ENCODE measurements at regions of chrX and their contacts with region 1.

Region 1: GRCh38 chrX:71532753-71533425 is at the start of gene OGT:
- DNase-seq: peak; percentile 76 to 98 (median 91)
- ATAC-seq: peak; percentile 78 to 81
- H3K4me3 Mint-ChIP-seq: peak within 1 kb of the TSS; percentile 94 to 99 (median 97)
- H3K27ac Mint-ChIP-seq: peak within 1 kb of the TSS; percentile 95 to 99 (median 98)
- H3K4me1 Mint-ChIP-seq: peaks cover 6 to 40% (median 28%) of the 10 kb centered on the region in 4 donors
- H3K27me3 Mint-ChIP-seq: no peaks in the 10 kb centered on the region
- polyA plus RNA-seq, gene OGT: 29.7 to 32.7 (median 31.3) TPM

Region 2: GRCh38 chrX:71365876-71366673 is 166.8 kb before region 1 on chrX and contains the start of gene TAF1:
- POLR2A ChIA-PET with region 1: interaction called, 45 read pairs
- DNase-seq: peak; percentile 74 to 97 (median 90)
- ATAC-seq: peak; percentile 89 to 91
- H3K4me3 Mint-ChIP-seq: peak within 1 kb of the TSS; percentile 90 to 99 (median 98)
- H3K27ac Mint-ChIP-seq: peak within 1 kb of the TSS; percentile 95 to 100 (median 99)
- H3K4me1 Mint-ChIP-seq: peaks cover 17 to 32% (median 26%) of the 10 kb centered on the region in 4 donors
- H3K27me3 Mint-ChIP-seq: no peaks in the 10 kb centered on the region
- polyA plus RNA-seq, gene TAF1: 4.3 to 10.2 (median 9.9) TPM

Region 3: DNA sequence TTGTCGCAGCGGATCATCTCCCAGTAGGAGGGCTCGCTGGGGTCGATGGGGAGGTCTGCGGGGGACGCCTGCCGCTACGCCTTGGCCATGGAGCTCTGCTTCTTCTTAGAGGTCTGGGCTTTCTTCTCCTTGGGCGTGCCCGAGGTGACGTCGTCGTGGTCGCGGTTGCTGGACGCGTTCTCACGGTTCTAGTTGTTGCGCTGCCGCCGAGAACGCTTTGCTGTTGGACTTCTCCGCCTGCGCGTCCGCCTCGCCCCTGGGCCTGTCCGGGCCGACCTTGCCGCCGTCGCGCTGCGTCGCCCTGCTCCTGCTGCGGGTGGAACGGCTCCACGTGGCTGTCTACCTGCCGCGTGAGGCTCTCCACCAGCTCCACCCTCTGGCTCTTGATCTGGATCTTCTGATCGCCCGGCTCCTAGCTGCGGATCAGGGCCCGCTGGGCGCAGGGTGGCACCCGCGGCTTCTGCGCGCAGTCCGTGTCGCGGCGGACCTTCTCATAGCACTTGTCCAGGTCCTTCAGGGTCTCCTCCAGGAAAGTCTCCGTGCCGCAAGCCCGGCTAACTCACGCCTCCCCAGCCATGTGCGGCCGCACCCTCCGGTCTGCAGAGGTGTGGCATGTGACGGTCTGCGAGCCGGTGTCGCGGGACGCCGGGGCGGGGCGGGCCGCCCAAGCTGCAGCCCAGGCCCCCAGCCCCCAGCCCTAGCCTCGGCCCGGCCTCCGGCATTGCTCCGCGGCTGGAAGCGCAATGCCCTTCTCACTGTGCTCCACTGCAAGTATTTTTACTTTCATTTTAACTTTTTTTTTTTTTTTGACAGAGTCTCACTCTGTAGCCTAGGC is 40.4 kb before region 1 on chrX:
- POLR2A ChIA-PET with region 1: interaction called, 44 read pairs
- DNase-seq: peak; percentile 11 to 70 (median 35)
- ATAC-seq: peak; percentile 87 to 88
- H3K4me3 Mint-ChIP-seq: peak overlapping the region; percentile 76 to 89 (median 84)
- H3K27ac Mint-ChIP-seq: peak overlapping the region in 8 of 10 donors; percentile 34 to 86 (median 79)
- H3K4me1 Mint-ChIP-seq: peaks cover 7 to 22% (median 11%) of the 10 kb centered on the region in 4 donors
- H3K27me3 Mint-ChIP-seq: no peaks in the 10 kb centered on the region

Region 4: GRCh38 chrX:71514367-71515038 is 18.4 kb before region 1 on chrX:
- POLR2A ChIA-PET with region 1: interaction called, 16 read pairs
- DNase-seq: peak in 8 of 10 donors; percentile 31 to 76 (median 58)
- ATAC-seq: peak; percentile 99 to 100
- H3K4me3 Mint-ChIP-seq: peak overlapping the region in 7 of 10 donors; percentile 3 to 30 (median 19)
- H3K27ac Mint-ChIP-seq: peak overlapping the region; percentile 37 to 92 (median 72)
- H3K4me1 Mint-ChIP-seq: peaks cover 12 to 22% (median 18%) of the 10 kb centered on the region in 4 donors
- H3K27me3 Mint-ChIP-seq: no peaks in the 10 kb centered on the region

Region 5: GRCh38 chrX:71550578-71550977 is 17.7 kb after region 1 on chrX:
- POLR2A ChIA-PET with region 1: interaction called, 47 read pairs
- DNase-seq: no peak
- ATAC-seq: no peak
- H3K4me3 Mint-ChIP-seq: no peak overlapping the region
- H3K27ac Mint-ChIP-seq: peak overlapping the region in 5 of 10 donors; percentile 2 to 66 (median 40)
- H3K4me1 Mint-ChIP-seq: peaks cover 0 to 41% (median 15%) of the 10 kb centered on the region in 4 donors
- H3K27me3 Mint-ChIP-seq: no peaks in the 10 kb centered on the region

Region 6: GRCh38 chrX:71606536-71607216 is 73.8 kb after region 1 on chrX:
- POLR2A ChIA-PET with region 1: interaction called, 13 read pairs
- DNase-seq: peak in 7 of 10 donors; percentile 25 to 79 (median 68)
- ATAC-seq: peak; percentile 92 to 93
- H3K4me3 Mint-ChIP-seq: peak overlapping the region; percentile 42 to 79 (median 72)
- H3K27ac Mint-ChIP-seq: peak overlapping the region; percentile 92 to 99 (median 96)
- H3K4me1 Mint-ChIP-seq: peaks cover 28 to 70% (median 58%) of the 10 kb centered on the region in 4 donors
- H3K27me3 Mint-ChIP-seq: no peaks in the 10 kb centered on the region

Region 7: GRCh38 chrX:71622576-71623450 is 89.9 kb after region 1 on chrX:
- POLR2A ChIA-PET with region 1: interaction called, 32 read pairs
- DNase-seq: peak in 9 of 10 donors; percentile 17 to 75 (median 53)
- ATAC-seq: peak; percentile 51 to 59
- H3K4me3 Mint-ChIP-seq: peak overlapping the region; percentile 20 to 86 (median 64)
- H3K27ac Mint-ChIP-seq: peak overlapping the region; percentile 87 to 95 (median 91)
- H3K4me1 Mint-ChIP-seq: peaks cover 18 to 61% (median 57%) of the 10 kb centered on the region in 4 donors
- H3K27me3 Mint-ChIP-seq: no peaks in the 10 kb centered on the region